Activated CD8-positive, alpha-beta T cell treated with anti-CD3 and anti-CD28 coated beads for 36 hours (primary cell): ENCODE measurements at regions of chr2 and their contacts with region 1.

Region 1: GRCh38 chr2:157480182-157480961 is 36.5 kb upstream of the CYTIP start:
- DNase-seq: peak; percentile 79
- ATAC-seq: peak; percentile 66
- H3K4me3 Mint-ChIP-seq: peak overlapping the region; percentile 80
- H3K27ac Mint-ChIP-seq: peak overlapping the region; percentile 98
- H3K4me1 Mint-ChIP-seq: peaks cover 82% of the 10 kb centered on the region
- H3K27me3 Mint-ChIP-seq: no peaks in the 10 kb centered on the region
- CTCF ChIP-seq: no peak

Region 2: GRCh38 chr2:156787517-156787916 is 692.9 kb before region 1 on chr2:
- CTCF ChIA-PET with region 1: no interaction called
- POLR2A ChIA-PET with region 1: no interaction called
- intact Hi-C with region 1: no loop called
- DNase-seq: no peak
- ATAC-seq: no peak
- H3K4me3 Mint-ChIP-seq: no peak overlapping the region
- H3K27ac Mint-ChIP-seq: no peak overlapping the region
- H3K4me1 Mint-ChIP-seq: no peaks in the 10 kb centered on the region
- H3K27me3 Mint-ChIP-seq: no peaks in the 10 kb centered on the region
- CTCF ChIP-seq: no peak

Region 3: DNA sequence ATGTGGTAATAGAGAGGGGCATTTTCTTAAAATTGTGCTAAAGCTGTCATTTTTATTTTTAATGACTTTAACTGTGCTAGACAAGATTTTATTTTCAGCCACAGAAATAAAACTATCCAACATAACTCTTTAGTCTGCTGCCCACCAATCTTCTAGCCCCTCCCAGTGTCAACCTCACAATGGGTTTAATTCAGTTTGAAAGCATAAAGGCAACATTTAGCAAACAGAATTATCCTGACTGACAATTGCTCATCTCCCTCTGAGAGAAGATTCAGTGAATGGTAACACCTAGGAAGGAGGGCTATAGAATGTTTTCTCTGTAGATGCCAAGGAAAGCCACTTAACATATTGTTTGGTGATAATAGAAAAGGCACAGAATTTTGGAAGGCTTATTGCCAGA is 160.0 kb before region 1 on chr2:
- CTCF ChIA-PET with region 1: no interaction called
- POLR2A ChIA-PET with region 1: interaction called, 3 read pairs
- intact Hi-C with region 1: loop called (anchors 5 kb)
- DNase-seq: no peak
- ATAC-seq: no peak
- H3K4me3 Mint-ChIP-seq: no peak overlapping the region
- H3K27ac Mint-ChIP-seq: no peak overlapping the region
- H3K4me1 Mint-ChIP-seq: peaks cover 23% of the 10 kb centered on the region
- H3K27me3 Mint-ChIP-seq: no peaks in the 10 kb centered on the region
- CTCF ChIP-seq: no peak